ENCODE measurements at regions of chr6 and their contacts with region 1.

Region 1: DNA sequence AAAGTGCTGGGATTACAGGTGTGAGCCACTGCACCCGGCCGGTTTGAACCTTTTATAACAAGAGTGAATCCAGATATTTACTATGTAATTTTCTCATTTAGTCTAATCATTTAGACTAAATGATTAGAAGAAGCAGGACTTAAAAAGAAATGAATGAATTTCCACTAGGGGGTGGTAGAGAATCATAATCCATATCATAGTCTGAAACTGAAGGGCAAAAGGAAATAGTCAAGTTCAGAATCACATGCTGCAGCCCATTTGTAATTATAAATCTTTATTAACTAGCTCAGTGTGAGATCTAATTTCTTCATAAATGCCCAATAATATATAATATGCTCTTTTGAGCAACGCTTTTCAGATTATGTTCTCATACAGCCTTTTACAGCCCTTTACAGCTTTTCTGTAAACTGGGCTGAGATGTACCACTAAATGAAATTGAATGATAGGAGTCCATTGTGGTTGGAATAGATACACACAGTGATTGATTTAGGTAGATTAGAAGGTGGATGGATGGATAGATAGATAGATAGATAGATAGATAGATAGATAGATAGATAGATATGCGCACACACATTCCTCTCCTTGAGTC is 31.8 kb downstream of the PSMB9 start:
- ATAC-seq: peak in 4 of 8 experiments; percentile 29 to 67 (median 58)
- H3K4me3 ChIP-seq: no peak overlapping the region
- H3K27ac ChIP-seq: no peak overlapping the region
- H3K4me1 ChIP-seq: no peaks in the 10 kb centered on the region

Region 2: DNA sequence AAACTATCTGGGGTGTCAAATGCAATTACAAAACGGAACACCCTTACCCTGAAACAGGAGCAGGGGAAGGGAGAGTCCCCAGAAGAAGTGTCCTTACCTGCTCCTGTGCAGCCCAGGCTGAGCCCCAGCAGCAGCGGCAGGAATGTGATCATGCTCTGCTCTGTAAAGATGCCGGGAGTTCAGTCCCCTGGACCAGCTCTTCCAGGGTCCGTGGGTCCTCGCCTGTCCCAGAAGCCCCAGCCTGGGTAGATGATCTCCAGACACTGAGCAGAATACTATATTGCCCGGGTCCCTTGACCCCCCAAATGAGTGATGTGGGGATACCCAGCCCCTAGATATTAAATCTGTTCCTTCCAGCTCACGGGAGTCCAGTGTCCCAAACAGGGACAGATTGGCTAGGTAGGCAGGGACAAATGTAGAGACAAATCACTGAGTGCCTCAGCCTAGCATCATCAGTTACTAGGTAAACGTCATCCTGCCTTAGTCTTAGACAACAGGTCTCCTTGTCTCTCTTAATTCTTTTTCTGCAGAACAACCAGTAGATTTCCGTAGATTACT is 54.9 kb after region 1 on chr6 and contains the start of gene HLA-DMB:
- in situ Hi-C with region 1: loop called in 1 of 9 experiments (anchors 10 kb)
- ATAC-seq: peak; percentile 99 to 100 (median 100)
- H3K4me3 ChIP-seq: peak within 1 kb of the TSS in 3 of 5 donors; percentile 14 to 43 (median 28)
- H3K27ac ChIP-seq: no peak within 1 kb of the TSS
- H3K4me1 ChIP-seq: no peaks in the 10 kb centered on the region
- total RNA-seq, gene HLA-DMB: 0.14 to 1.1 (median 0.34) TPM

Region 3: DNA sequence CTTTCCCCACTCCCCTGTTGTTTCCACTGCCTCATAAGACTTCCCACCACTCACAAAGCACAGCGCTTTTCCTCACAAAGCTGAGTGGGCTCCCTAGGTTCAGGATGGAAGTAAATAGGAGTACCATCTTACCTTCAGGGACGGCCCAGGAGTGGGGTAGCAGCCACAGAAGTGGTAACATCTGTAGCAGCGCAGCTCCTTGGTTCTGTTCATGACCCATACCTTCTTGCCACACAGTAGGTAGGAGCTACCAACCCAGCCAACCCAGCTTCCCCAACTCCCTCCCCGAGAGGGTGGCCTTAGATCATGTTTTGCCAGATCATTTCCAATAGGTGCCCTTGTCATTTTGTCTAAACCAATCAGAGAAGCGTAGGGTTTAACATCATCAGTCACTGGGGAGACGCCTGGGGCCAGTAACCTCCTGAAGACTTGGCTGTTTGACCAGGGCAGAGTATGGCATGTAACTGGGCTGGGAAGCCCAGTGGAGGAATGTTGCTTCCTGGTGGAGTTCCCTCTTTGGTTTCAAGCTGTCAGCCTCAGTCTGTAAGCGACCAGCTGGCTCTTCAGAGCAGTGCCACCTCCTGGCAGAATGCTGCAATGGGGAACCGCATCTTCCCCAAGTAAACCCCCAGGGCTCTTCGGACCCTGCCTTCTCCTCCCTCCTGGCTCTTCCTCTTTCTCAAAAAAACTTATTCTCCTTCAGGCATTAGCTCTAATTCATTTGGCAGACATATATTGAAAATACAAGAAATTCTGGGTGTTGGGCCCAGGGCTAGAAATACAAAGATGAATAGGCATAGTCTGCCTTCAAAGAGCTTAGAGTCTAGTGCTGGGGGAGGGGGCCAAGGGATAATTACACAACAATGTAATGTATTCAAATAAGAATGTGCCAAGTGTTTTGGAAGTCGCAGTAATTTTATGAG is 67.3 kb after region 1 on chr6 and contains the start of gene HLA-DMA:
- in situ Hi-C with region 1: loop called in 2 of 9 experiments (anchors 10 kb)
- ATAC-seq: peak; percentile 16 to 99 (median 75)
- H3K4me3 ChIP-seq: no peak within 1 kb of the TSS
- H3K27ac ChIP-seq: no peak within 1 kb of the TSS
- H3K4me1 ChIP-seq: no peaks in the 10 kb centered on the region
- total RNA-seq, gene HLA-DMA: 0.46 to 6.1 (median 1.3) TPM

Region 4: DNA sequence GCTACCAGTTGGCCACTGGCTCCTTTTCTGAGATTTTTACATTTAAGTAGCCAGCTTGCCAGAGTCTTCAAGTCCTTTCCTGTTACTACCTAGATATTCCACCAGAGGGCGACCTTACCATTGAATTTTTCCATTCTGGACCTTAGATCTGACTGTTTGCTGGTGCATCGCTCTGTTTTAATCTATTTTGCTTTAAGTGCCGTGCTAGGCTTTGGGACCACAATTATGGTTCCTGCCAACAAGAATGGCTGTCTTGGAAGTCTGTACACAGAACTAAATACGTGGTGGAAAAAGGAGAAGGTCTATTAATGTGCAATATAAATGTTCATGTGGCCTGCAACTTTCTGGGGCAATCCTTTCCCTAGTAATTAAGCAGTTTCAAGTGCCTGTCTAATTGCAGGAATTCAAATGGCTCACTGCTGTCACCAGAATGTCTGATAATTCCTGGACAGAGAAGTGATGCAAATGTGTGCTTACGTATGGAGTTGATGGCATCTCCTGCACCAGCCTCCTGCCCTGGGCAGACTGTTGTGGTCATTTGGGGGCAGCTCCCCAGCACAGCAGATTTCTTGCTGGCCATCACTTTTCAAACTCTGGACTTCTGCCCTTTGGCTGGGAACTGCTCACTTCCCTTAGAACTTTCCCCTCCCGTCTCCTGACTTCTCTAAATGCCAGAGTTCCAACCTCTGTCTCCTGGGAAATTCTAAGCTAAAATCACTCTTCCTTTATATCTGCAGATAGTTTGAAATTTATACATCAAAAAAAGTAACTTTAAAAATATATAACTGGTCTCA is 129.2 kb after region 1 on chr6:
- in situ Hi-C with region 1: no loop called
- ATAC-seq: peak; percentile 39 to 78 (median 68)
- H3K4me3 ChIP-seq: no peak overlapping the region
- H3K27ac ChIP-seq: no peak overlapping the region
- H3K4me1 ChIP-seq: peaks cover 0 to 2% of the 10 kb centered on the region in 2 donors

Measured in motor neuron (in vitro differentiated cells).